ENCODE measurements at regions of chr5 and their contacts with region 1.

Region 1: DNA sequence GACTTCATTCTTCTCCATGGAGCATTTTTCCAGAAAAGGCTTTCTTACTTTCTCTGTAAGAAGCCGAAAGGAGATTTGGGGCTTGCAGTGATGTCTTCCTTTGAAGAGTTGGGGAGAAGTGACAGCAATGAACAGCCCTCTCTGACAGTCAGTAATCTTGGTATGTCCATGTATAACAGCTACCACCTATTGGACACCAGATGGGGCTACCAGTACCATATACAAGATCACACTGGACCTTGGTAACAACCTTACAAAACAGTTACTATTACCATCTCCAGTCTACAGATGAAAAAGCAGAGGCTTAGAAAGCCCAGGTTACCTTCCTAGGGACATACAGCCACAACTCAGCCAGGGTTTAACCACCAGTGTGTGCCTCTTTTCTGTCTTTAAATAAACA is 272.7 kb upstream of the TRPC7 start:
- DNase-seq: no peak
- H3K4me3 ChIP-seq: no peak overlapping the region
- CTCF ChIP-seq: peak; percentile 48

Region 2: DNA sequence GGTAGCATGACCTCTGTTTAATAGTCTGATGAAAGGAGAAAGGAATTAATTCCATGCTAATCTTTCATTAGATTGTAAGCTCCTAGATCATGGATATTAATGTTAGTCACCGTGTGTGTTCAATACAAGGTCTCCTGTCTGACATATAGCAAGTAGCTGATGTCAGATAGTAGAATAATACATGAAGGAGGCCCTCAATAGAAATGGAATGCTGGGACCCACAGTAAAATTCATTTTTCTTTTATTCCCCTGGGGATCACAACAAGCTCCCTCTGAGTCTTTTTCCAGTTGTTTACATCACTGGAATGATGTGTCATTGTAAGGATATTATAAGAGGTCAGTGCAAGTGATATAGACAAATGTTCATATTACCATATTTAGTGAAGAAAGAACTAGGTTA is 32.4 kb before region 1 on chr5:
- CTCF ChIA-PET with region 1: no interaction called
- POLR2A ChIA-PET with region 1: no interaction called
- DNase-seq: peak; percentile 9
- H3K4me3 ChIP-seq: no peak overlapping the region
- CTCF ChIP-seq: no peak

Region 3: DNA sequence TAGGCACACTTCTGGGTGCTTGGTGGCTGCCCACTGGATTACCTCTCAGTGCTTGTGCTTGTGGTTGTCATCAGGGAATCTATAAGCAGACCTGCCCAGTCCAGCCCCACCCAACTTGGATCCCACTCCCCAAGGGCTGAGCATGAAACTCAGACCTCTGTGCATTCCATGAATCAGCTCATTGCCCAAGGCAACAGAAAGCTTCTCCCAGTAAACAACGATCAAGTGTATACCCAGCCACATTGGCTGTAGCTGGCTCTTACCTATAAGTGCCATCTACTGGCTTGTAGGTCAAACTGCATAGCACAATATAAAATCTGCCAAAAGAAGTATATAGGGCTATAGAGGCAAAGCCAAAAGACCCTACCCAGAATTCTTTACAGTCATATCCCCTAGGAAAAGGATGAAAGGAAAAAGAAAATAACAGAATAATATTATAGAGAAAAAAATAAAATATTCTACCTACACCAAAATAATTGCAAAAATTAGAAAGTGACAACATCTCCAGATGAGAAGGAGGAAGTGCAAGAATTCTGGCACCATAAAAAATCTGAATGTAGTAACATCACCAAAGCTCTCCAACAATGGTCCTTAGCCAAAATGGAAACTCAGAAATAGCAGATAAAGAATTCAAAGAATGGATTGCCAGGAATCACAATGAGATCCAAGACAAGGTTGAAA is 48.3 kb after region 1 on chr5:
- CTCF ChIA-PET with region 1: interaction called, 49 read pairs
- POLR2A ChIA-PET with region 1: no interaction called
- DNase-seq: no peak
- H3K4me3 ChIP-seq: no peak overlapping the region
- CTCF ChIP-seq: peak; percentile 41

Region 4: GRCh38 chr5:136780522-136780921 is 142.4 kb after region 1 on chr5:
- CTCF ChIA-PET with region 1: interaction called, 12 read pairs
- POLR2A ChIA-PET with region 1: no interaction called
- DNase-seq: no peak
- H3K4me3 ChIP-seq: no peak overlapping the region
- CTCF ChIP-seq: no peak

Measured in AG04449 (cell line).